ENCODE measurements at regions of chr2 and their contacts with region 1.

Region 1: GRCh38 chr2:232843834-232844233 is 26.2 kb upstream of the SNORC start:
- DNase-seq: no peak
- ATAC-seq: no peak
- H3K4me3 ChIP-seq: no peak overlapping the region
- H3K27ac ChIP-seq: no peak overlapping the region
- H3K4me1 ChIP-seq: peaks cover 2% of the 10 kb centered on the region; the same call in 1 of the 2 replicates
- H3K27me3 ChIP-seq: no peaks in the 10 kb centered on the region
- CTCF ChIP-seq: no peak
- EP300 ChIP-seq: no peak
- POLR2A ChIP-seq: no peak
- RAD21 ChIP-seq: no peak

Region 2: GRCh38 chr2:232854082-232854481 is 10.2 kb after region 1 on chr2:
- CTCF ChIA-PET with region 1: interaction called, 8 read pairs
- POLR2A ChIA-PET with region 1: no interaction called
- RAD21 ChIA-PET with region 1: interaction called, 5 read pairs
- SMC1A ChIA-PET with region 1: interaction called, 11 read pairs
- in situ Hi-C with region 1: no loop called
- intact Hi-C with region 1: no loop called
- DNase-seq: no peak
- ATAC-seq: no peak
- H3K4me3 ChIP-seq: no peak overlapping the region
- H3K27ac ChIP-seq: no peak overlapping the region
- H3K4me1 ChIP-seq: no peaks in the 10 kb centered on the region
- H3K27me3 ChIP-seq: no peaks in the 10 kb centered on the region
- CTCF ChIP-seq: no peak
- EP300 ChIP-seq: no peak
- POLR2A ChIP-seq: no peak
- RAD21 ChIP-seq: no peak

Measured in GM12878 (cell line).